ENCODE measurements at regions of chr3 and their contacts with region 1.

Region 1: GRCh38 chr3:56754741-56755417 is 46.9 kb downstream of the ARHGEF3 start:
- DNase-seq: no peak

Region 2: GRCh38 chr3:56796202-56796601 is 41.3 kb after region 1 on chr3:
- intact Hi-C with region 1: loop called (anchors 2 kb)
- DNase-seq: no peak